B cell (primary cell): ENCODE measurements at regions of chr17 and their contacts with region 1.

Region 1: GRCh38 chr17:7687908-7688807 is at the start of gene WRAP53:
- DNase-seq: peak; percentile 96
- ATAC-seq: peak; percentile 76
- H3K4me3 ChIP-seq: peak within 1 kb of the TSS; percentile 68 to 100 (median 100)
- H3K4me3 Mint-ChIP-seq: peak within 1 kb of the TSS; percentile 98
- H3K27ac ChIP-seq: peak within 1 kb of the TSS; percentile 94 to 99
- H3K27ac Mint-ChIP-seq: peak within 1 kb of the TSS; percentile 100
- H3K4me1 ChIP-seq: peaks cover 22 to 32% of the 10 kb centered on the region in 2 donors
- H3K4me1 Mint-ChIP-seq: peaks cover 34% of the 10 kb centered on the region
- H3K27me3 ChIP-seq: no peaks in the 10 kb centered on the region
- H3K27me3 Mint-ChIP-seq: no peaks in the 10 kb centered on the region
- CTCF ChIP-seq: peak; percentile 100
- total RNA-seq, gene WRAP53: 17.2 and 18.2 TPM in 2 replicates

Region 2: DNA sequence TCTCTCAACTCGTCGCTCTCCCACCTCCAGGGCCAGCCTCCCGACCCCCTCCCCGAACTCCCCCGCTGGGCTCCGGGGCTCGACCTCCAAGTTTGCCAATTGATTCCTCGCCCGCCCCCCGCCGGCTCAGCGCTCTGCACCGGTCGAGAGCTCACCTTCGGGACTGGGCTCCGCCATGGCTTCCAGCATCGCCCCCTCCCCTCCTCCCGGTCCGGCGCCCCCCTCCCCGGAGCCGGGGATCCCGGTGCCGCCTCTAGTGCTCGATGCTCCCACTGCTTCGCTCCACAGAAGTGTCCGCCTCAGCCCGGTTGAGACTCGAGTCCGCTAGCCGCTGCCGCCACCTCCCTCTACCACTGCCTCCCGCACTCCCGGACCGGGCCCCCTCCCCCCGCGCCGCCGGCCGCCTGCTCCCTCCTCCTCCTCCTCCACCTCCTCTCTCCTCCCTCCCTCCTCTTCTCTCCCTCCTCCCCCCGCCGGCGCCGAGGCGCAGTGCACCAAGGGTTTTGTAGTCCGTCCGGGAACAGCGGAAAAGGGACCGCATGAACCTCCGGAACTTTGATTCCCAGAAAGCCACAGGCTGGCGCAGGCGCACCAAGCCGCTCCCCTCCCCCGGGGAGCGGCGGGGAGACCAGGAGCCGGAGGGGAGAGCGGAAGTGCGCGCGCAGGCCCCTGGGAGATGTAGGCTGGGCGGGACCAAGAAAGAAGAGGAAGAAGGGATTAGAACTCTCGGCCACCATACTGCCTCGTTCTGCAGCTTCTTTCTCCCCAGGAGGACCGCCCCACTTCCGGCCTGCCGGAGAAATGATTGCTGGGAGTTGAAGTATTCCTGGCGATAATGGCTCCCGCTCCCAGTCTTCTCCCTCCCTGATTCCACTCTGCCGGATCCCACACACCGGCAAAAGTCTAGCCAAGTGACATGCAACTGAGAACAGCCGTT is 448.8 kb before region 1 on chr17 and contains the start of gene PHF23:
- CTCF ChIA-PET with region 1: no interaction called
- POLR2A ChIA-PET with region 1: no interaction called
- intact Hi-C with region 1: loop called (anchors 2 kb)
- DNase-seq: peak; percentile 98
- ATAC-seq: peak; percentile 64
- H3K4me3 ChIP-seq: peak within 1 kb of the TSS; percentile 74 to 97 (median 75)
- H3K4me3 Mint-ChIP-seq: peak within 1 kb of the TSS; percentile 98
- H3K27ac ChIP-seq: peak within 1 kb of the TSS; percentile 55 to 97
- H3K27ac Mint-ChIP-seq: peak within 1 kb of the TSS; percentile 100
- H3K4me1 ChIP-seq: peaks cover 42 to 49% of the 10 kb centered on the region in 2 donors
- H3K4me1 Mint-ChIP-seq: peaks cover 61% of the 10 kb centered on the region
- H3K27me3 ChIP-seq: no peaks in the 10 kb centered on the region
- H3K27me3 Mint-ChIP-seq: no peaks in the 10 kb centered on the region
- CTCF ChIP-seq: no peak
- total RNA-seq, gene PHF23: 42.3 and 45.8 TPM in 2 replicates

Region 3: DNA sequence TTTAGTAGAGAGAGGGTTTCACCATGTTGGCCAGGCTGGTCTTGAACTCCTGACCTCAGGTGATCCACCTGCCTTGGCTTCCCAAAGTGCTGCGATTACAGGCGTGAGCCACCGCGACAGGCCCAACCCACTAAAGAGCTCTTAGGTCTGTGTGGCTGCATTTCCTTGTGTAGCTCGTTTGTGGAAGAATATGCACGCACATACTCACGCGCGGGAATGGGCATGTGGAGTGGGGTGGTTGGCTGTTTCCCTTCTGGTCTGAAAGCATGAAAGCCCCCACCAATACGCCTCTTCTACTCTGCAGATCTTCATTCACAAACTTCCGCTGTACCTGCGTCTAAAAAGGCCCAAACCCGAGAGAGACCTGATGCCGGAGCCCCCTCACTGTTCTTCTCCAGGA is 233.2 kb before region 1 on chr17:
- CTCF ChIA-PET with region 1: no interaction called
- POLR2A ChIA-PET with region 1: no interaction called
- intact Hi-C with region 1: loop called (anchors 1 kb)
- DNase-seq: no peak
- ATAC-seq: no peak
- H3K4me3 ChIP-seq: peak overlapping the region; percentile 55 to 99 (median 90)
- H3K4me3 Mint-ChIP-seq: peak overlapping the region; percentile 91
- H3K27ac ChIP-seq: no peak overlapping the region
- H3K27ac Mint-ChIP-seq: peak overlapping the region; percentile 81
- H3K4me1 ChIP-seq: peaks cover 5 to 10% of the 10 kb centered on the region in 2 donors
- H3K4me1 Mint-ChIP-seq: peaks cover 11% of the 10 kb centered on the region
- H3K27me3 ChIP-seq: no peaks in the 10 kb centered on the region
- H3K27me3 Mint-ChIP-seq: peaks cover 4% of the 10 kb centered on the region
- CTCF ChIP-seq: no peak

Region 4: GRCh38 chr17:7583253-7584109 is 104.7 kb before region 1 on chr17 and contains the start of gene MPDU1:
- CTCF ChIA-PET with region 1: interaction called, 25 read pairs
- POLR2A ChIA-PET with region 1: interaction called, 25 read pairs
- intact Hi-C with region 1: loop called (anchors 1 kb)
- DNase-seq: peak; percentile 98
- ATAC-seq: peak; percentile 78
- H3K4me3 ChIP-seq: peak within 1 kb of the TSS; percentile 77 to 96 (median 86)
- H3K4me3 Mint-ChIP-seq: peak within 1 kb of the TSS; percentile 100
- H3K27ac ChIP-seq: peak within 1 kb of the TSS; percentile 91 to 95
- H3K27ac Mint-ChIP-seq: peak within 1 kb of the TSS; percentile 100
- H3K4me1 ChIP-seq: peaks cover 48 to 68% of the 10 kb centered on the region in 2 donors
- H3K4me1 Mint-ChIP-seq: peaks cover 57% of the 10 kb centered on the region
- H3K27me3 ChIP-seq: no peaks in the 10 kb centered on the region
- H3K27me3 Mint-ChIP-seq: no peaks in the 10 kb centered on the region
- CTCF ChIP-seq: no peak
- total RNA-seq, gene MPDU1: 29.7 and 31.7 TPM in 2 replicates

Region 5: GRCh38 chr17:7650509-7651096 is 37.6 kb before region 1 on chr17 and contains the start of gene ATP1B2:
- CTCF ChIA-PET with region 1: interaction called, 7 read pairs
- POLR2A ChIA-PET with region 1: interaction called, 10 read pairs
- intact Hi-C with region 1: loop called (anchors 2 kb)
- DNase-seq: peak; percentile 87
- ATAC-seq: peak; percentile 85
- H3K4me3 ChIP-seq: peak within 1 kb of the TSS; percentile 26 to 74 (median 47)
- H3K4me3 Mint-ChIP-seq: peak within 1 kb of the TSS; percentile 91
- H3K27ac ChIP-seq: no peak within 1 kb of the TSS
- H3K27ac Mint-ChIP-seq: peak within 1 kb of the TSS; percentile 20
- H3K4me1 ChIP-seq: peaks cover 20 to 24% of the 10 kb centered on the region in 2 donors
- H3K4me1 Mint-ChIP-seq: peaks cover 19% of the 10 kb centered on the region
- H3K27me3 ChIP-seq: peaks cover 0 to 53% (median 29%) of the 10 kb centered on the region in 4 experiments
- H3K27me3 Mint-ChIP-seq: peaks cover 49% of the 10 kb centered on the region
- CTCF ChIP-seq: no peak
- total RNA-seq, gene ATP1B2: 0.27 and 0.39 TPM in 2 replicates

Region 6: GRCh38 chr17:7856883-7857723 is 168.9 kb after region 1 on chr17 and contains the start of gene NAA38:
- CTCF ChIA-PET with region 1: interaction called, 8 read pairs
- POLR2A ChIA-PET with region 1: interaction called, 14 read pairs
- intact Hi-C with region 1: loop called (anchors 5 kb)
- DNase-seq: peak; percentile 99
- ATAC-seq: peak; percentile 82
- H3K4me3 ChIP-seq: peak within 1 kb of the TSS; percentile 57 to 92 (median 85)
- H3K4me3 Mint-ChIP-seq: no peak within 1 kb of the TSS
- H3K27ac ChIP-seq: peak within 1 kb of the TSS; percentile 85 to 90
- H3K27ac Mint-ChIP-seq: no peak within 1 kb of the TSS
- H3K4me1 ChIP-seq: peaks cover 20 to 32% of the 10 kb centered on the region in 2 donors
- H3K4me1 Mint-ChIP-seq: peaks cover 5% of the 10 kb centered on the region
- H3K27me3 ChIP-seq: no peaks in the 10 kb centered on the region
- H3K27me3 Mint-ChIP-seq: no peaks in the 10 kb centered on the region
- CTCF ChIP-seq: no peak
- total RNA-seq, gene NAA38: 20.0 and 22.0 TPM in 2 replicates